ENCODE measurements at regions of chr11 and their contacts with region 1.

Region 1: GRCh38 chr11:113314389-113315301 is at the start of gene TTC12:
- DNase-seq: peak; percentile 93
- H3K4me3 ChIP-seq: peak within 1 kb of the TSS; percentile 32 to 80 (median 57)
- H3K27ac ChIP-seq: peak within 1 kb of the TSS; percentile 67
- H3K4me1 ChIP-seq: peaks cover 3% of the 10 kb centered on the region
- H3K27me3 ChIP-seq: no peaks in the 10 kb centered on the region
- CTCF ChIP-seq: no peak
- POLR2A ChIP-seq: peak; percentile 60
- total RNA-seq, gene TTC12: 2.2 and 5.2 TPM in 2 replicates

Region 2: GRCh38 chr11:113384551-113384950 is 69.9 kb after region 1 on chr11:
- CTCF ChIA-PET with region 1: interaction called, 5 read pairs
- POLR2A ChIA-PET with region 1: no interaction called
- dilution Hi-C with region 1: no loop called
- intact Hi-C with region 1: loop called (anchors 1 kb)
- DNase-seq: peak; percentile 94
- H3K4me3 ChIP-seq: no peak overlapping the region
- H3K27ac ChIP-seq: peak overlapping the region; percentile 70
- H3K4me1 ChIP-seq: peaks cover 24% of the 10 kb centered on the region
- H3K27me3 ChIP-seq: peaks cover 2% of the 10 kb centered on the region in 2 experiments
- CTCF ChIP-seq: no peak
- POLR2A ChIP-seq: peak; percentile 46

Region 3: GRCh38 chr11:113474362-113475159 is 159.9 kb after region 1 on chr11:
- CTCF ChIA-PET with region 1: no interaction called
- POLR2A ChIA-PET with region 1: no interaction called
- dilution Hi-C with region 1: no loop called
- intact Hi-C with region 1: loop called (anchors 5 kb)
- DNase-seq: peak; percentile 64
- H3K4me3 ChIP-seq: no peak overlapping the region
- H3K27ac ChIP-seq: no peak overlapping the region
- H3K4me1 ChIP-seq: no peaks in the 10 kb centered on the region
- H3K27me3 ChIP-seq: peaks cover 7 to 13% of the 10 kb centered on the region in 2 experiments
- CTCF ChIP-seq: no peak
- POLR2A ChIP-seq: no peak

Region 4: GRCh38 chr11:113487622-113488021 is 173.0 kb after region 1 on chr11:
- CTCF ChIA-PET with region 1: no interaction called
- POLR2A ChIA-PET with region 1: no interaction called
- dilution Hi-C with region 1: no loop called
- intact Hi-C with region 1: no loop called
- DNase-seq: no peak
- H3K4me3 ChIP-seq: no peak overlapping the region
- H3K27ac ChIP-seq: no peak overlapping the region
- H3K4me1 ChIP-seq: no peaks in the 10 kb centered on the region
- H3K27me3 ChIP-seq: no peaks in the 10 kb centered on the region
- CTCF ChIP-seq: no peak
- POLR2A ChIP-seq: no peak

Region 5: DNA sequence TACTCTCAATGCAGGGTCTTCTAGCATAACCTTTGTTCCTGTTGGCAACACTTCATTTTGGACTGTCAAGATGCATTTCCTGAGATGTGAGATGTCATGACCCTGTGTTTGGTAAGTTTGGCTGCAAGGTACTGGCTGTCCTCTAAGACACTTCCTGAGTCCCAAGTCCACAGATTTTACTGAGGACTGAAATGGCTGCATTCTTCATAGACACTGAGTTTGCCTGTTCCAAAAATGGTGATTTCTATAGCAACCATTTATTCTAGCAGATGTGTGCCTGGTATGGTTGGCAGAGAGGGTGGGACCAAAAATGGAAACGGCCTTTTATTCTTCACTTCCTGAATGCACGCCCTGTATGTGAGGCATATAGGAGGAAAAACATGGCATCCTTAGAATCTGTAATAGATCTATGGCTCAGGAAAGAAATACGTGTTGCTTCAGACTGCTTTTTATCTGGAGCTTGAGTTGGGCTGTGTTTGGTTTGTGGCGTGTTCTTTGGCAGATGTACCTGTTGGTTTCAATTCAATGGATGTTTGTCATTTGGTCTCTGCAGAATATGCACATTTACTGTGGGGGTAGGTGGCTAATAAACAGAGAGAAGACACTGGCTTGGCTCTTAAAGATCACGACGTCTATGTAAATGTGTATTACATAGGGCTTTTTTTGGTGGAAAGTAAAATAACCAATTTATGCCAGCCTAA is 807.3 kb after region 1 on chr11:
- CTCF ChIA-PET with region 1: no interaction called
- POLR2A ChIA-PET with region 1: no interaction called
- dilution Hi-C with region 1: no loop called
- intact Hi-C with region 1: no loop called
- DNase-seq: no peak
- H3K4me3 ChIP-seq: no peak overlapping the region
- H3K27ac ChIP-seq: no peak overlapping the region
- H3K4me1 ChIP-seq: no peaks in the 10 kb centered on the region
- H3K27me3 ChIP-seq: no peaks in the 10 kb centered on the region
- CTCF ChIP-seq: no peak
- POLR2A ChIP-seq: no peak